Transverse colon (tissue), 4 donors: ENCODE measurements at regions of chrX and their contacts with region 1.

Region 1: GRCh38 chrX:154051201-154051810 is 31.6 kb upstream of the IRAK1 start:
- DNase-seq: peak; percentile 81
- H3K4me3 ChIP-seq: no peak overlapping the region
- H3K27ac ChIP-seq: peak overlapping the region in 1 of 4 donors; percentile 28
- H3K4me1 ChIP-seq: peaks cover 0 to 38% (median 6%) of the 10 kb centered on the region in 4 donors
- H3K27me3 ChIP-seq: no peaks in the 10 kb centered on the region
- CTCF ChIP-seq: peak; percentile 49 to 65 (median 56)
- EP300 ChIP-seq: no peak
- POLR2A ChIP-seq: no peak

Region 2: DNA sequence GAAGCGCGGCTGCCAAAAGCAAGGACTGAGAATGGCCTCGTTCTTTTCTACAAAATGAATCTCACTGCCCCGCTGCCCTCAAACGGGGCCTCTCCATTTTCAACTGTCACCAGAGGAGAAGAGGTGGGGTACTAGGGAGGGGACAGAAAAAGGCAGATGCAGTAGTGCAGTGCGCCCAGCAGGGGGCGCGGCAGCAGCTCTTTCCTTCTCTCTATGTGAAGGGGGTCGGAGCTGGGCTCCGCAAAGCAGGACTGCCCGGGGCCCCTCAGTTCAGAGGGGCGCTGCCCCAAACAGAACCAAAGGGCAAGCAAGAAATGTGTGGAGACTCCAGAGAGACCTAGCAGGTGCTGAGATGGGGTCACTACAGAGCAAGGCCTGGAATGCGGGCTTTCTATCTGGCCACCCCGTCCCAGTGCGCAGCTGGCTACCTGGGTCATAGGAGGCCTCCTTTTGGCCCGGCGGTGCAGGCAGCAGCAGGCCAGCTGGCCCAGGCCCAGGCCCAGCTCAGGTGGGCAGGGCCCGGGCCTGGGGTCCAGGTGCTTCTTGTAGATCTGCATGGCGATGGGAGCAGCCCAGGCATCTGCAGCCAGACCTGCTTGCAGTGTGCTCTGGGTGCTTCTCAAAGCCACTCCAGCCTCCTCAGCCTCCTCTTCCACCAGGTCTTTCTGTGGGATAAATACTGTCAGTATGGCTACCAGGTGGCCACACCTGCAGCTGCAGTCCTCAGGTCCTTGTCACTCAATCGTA is 37.5 kb before region 1 on chrX:
- in situ Hi-C with region 1: no loop called
- intact Hi-C with region 1: loop called (anchors 5 kb)
- DNase-seq: no peak
- H3K4me3 ChIP-seq: no peak overlapping the region
- H3K27ac ChIP-seq: peak overlapping the region in 1 of 4 donors; percentile 20
- H3K4me1 ChIP-seq: peaks cover 0 to 14% (median 8%) of the 10 kb centered on the region in 4 donors
- H3K27me3 ChIP-seq: no peaks in the 10 kb centered on the region
- CTCF ChIP-seq: peak; percentile 76 to 93 (median 84)
- EP300 ChIP-seq: no peak
- POLR2A ChIP-seq: no peak

Region 3: GRCh38 chrX:154025230-154025629 is 26.1 kb before region 1 on chrX:
- in situ Hi-C with region 1: no loop called
- intact Hi-C with region 1: no loop called
- DNase-seq: no peak
- H3K4me3 ChIP-seq: no peak overlapping the region
- H3K27ac ChIP-seq: no peak overlapping the region
- H3K4me1 ChIP-seq: peaks cover 0 to 18% (median 5%) of the 10 kb centered on the region in 4 donors
- H3K27me3 ChIP-seq: no peaks in the 10 kb centered on the region
- CTCF ChIP-seq: no peak
- EP300 ChIP-seq: no peak
- POLR2A ChIP-seq: no peak